Left ventricle myocardium inferior (tissue), 1 donor: ENCODE measurements at regions of chr1 and their contacts with region 1.

Region 1: DNA sequence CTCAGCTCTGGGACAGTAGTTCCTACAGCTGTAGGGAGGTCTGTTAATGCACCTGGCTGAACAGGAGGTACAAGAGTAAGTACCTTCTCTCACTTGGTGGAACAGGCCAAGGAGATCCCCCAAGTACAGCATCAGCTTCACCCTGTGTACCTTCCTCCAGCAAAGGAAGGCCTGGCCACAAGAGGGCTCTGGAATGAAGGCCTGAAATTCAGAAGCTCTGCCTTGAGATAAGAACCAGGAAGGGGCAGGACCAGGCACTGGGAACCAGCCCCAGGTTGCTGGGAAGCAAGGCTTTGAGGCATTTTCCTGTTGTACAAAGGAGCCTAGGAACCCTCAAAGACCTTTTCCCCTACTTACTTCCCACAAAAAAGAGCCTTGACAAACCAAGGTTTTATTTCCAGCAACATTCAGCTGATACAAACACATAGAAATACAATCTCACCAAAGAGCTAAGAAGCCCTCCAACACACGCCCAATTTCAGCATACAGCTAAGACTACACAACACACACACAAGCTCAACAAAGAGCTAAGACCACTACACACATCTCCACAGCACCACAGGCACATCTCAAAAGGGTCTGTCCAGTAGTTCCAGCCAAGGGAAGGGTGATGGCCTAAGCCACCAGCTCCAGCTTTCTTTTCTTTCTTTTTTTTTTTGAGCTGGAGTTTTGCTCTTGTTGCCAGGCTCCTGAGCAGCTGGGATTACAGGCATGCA is 23.5 kb downstream of the F11R start:
- DNase-seq: peak; percentile 52
- H3K4me3 ChIP-seq: no peak overlapping the region
- H3K27ac ChIP-seq: peak overlapping the region; percentile 64
- H3K4me1 ChIP-seq: peaks cover 17% of the 10 kb centered on the region
- H3K27me3 ChIP-seq: no peaks in the 10 kb centered on the region
- CTCF ChIP-seq: peak; percentile 80

Region 2: DNA sequence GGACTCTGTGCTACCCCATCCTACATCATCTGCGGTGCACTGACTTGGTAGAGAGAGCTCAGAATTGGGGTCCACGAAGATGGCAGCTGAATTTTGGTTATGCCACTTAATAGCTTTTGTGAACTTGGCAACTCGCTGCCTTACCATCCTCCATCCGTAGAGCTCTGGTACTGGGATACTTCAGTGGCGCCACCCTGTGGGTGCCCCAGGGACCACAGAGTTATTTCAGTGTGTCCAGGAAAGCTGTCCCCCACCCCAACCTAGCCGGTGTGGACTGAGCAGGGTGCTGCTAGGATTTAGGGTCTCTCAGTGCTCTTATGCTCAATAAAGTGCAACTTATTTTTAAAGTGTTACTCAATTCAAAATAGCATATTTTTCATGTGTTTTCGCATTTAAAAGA is 57.3 kb after region 1 on chr1:
- intact Hi-C with region 1: loop called (anchors 10 kb)
- DNase-seq: no peak
- H3K4me3 ChIP-seq: no peak overlapping the region
- H3K27ac ChIP-seq: no peak overlapping the region
- H3K4me1 ChIP-seq: no peaks in the 10 kb centered on the region
- H3K27me3 ChIP-seq: peaks cover 50% of the 10 kb centered on the region
- CTCF ChIP-seq: no peak

Region 3: GRCh38 chr1:161098210-161099068 is 101.0 kb after region 1 on chr1 and contains the start of gene KLHDC9:
- intact Hi-C with region 1: loop called (anchors 5 kb)
- DNase-seq: peak; percentile 71
- H3K4me3 ChIP-seq: peak within 1 kb of the TSS; percentile 71
- H3K27ac ChIP-seq: peak within 1 kb of the TSS; percentile 79
- H3K4me1 ChIP-seq: peaks cover 47% of the 10 kb centered on the region
- H3K27me3 ChIP-seq: no peaks in the 10 kb centered on the region
- CTCF ChIP-seq: no peak
- total RNA-seq, gene KLHDC9: 9.1 TPM